ENCODE measurements at regions of chr3 and their contacts with region 1.

Region 1: GRCh38 chr3:141452036-141452435 is 34.8 kb upstream of the RASA2 start:
- DNase-seq: peak; percentile 80
- ATAC-seq: peak; percentile 68
- H3K4me3 ChIP-seq: no peak overlapping the region
- H3K27ac ChIP-seq: peak overlapping the region; percentile 28; the same call in 1 of the 2 replicates
- H3K4me1 ChIP-seq: peaks cover 24% of the 10 kb centered on the region
- H3K27me3 ChIP-seq: no peaks in the 10 kb centered on the region
- CTCF ChIP-seq: peak; percentile 89
- POLR2A ChIP-seq: peak; percentile 59; the same call in 1 of the 2 replicates
- RAD21 ChIP-seq: peak; percentile 95

Region 2: GRCh38 chr3:141000027-141000663 is 451.9 kb before region 1 on chr3:
- CTCF ChIA-PET with region 1: no interaction called
- POLR2A ChIA-PET with region 1: no interaction called
- dilution Hi-C with region 1: no loop called
- in situ Hi-C with region 1: loop called (anchors 10 kb)
- intact Hi-C with region 1: no loop called
- DNase-seq: peak; percentile 42
- ATAC-seq: peak; percentile 100
- H3K4me3 ChIP-seq: no peak overlapping the region
- H3K27ac ChIP-seq: no peak overlapping the region
- H3K4me1 ChIP-seq: no peaks in the 10 kb centered on the region
- H3K27me3 ChIP-seq: peaks cover 5% of the 10 kb centered on the region
- CTCF ChIP-seq: peak; percentile 70
- POLR2A ChIP-seq: no peak
- RAD21 ChIP-seq: peak; percentile 75

Region 3: GRCh38 chr3:141231101-141231935 is 220.7 kb before region 1 on chr3 and contains the start of gene PXYLP1:
- CTCF ChIA-PET with region 1: interaction called, 7 read pairs
- POLR2A ChIA-PET with region 1: no interaction called
- dilution Hi-C with region 1: no loop called
- in situ Hi-C with region 1: no loop called
- intact Hi-C with region 1: loop called (anchors 1 kb)
- DNase-seq: peak; percentile 85
- ATAC-seq: peak; percentile 98
- H3K4me3 ChIP-seq: peak within 1 kb of the TSS; percentile 71
- H3K27ac ChIP-seq: peak within 1 kb of the TSS; percentile 61
- H3K4me1 ChIP-seq: peaks cover 5% of the 10 kb centered on the region; the same call in 1 of the 2 replicates
- H3K27me3 ChIP-seq: peaks cover 3% of the 10 kb centered on the region; the same call in 1 of the 2 replicates
- CTCF ChIP-seq: peak; percentile 95
- POLR2A ChIP-seq: peak; percentile 82
- RAD21 ChIP-seq: peak; percentile 70
- total RNA-seq, gene PXYLP1: 13.3 and 15.6 TPM in 2 replicates

Region 4: GRCh38 chr3:141311496-141312353 is 140.3 kb before region 1 on chr3:
- CTCF ChIA-PET with region 1: interaction called, 26 read pairs
- POLR2A ChIA-PET with region 1: interaction called, 5 read pairs
- dilution Hi-C with region 1: no loop called
- in situ Hi-C with region 1: no loop called
- intact Hi-C with region 1: no loop called
- DNase-seq: peak; percentile 98
- ATAC-seq: peak; percentile 97
- H3K4me3 ChIP-seq: peak overlapping the region; percentile 74
- H3K27ac ChIP-seq: peak overlapping the region; percentile 75
- H3K4me1 ChIP-seq: peaks cover 4% of the 10 kb centered on the region; the same call in 1 of the 2 replicates
- H3K27me3 ChIP-seq: no peaks in the 10 kb centered on the region
- CTCF ChIP-seq: peak; percentile 90
- POLR2A ChIP-seq: peak; percentile 33
- RAD21 ChIP-seq: peak; percentile 92

Region 5: GRCh38 chr3:141360888-141361598 is 91.0 kb before region 1 on chr3:
- CTCF ChIA-PET with region 1: interaction called, 13 read pairs
- POLR2A ChIA-PET with region 1: no interaction called
- dilution Hi-C with region 1: no loop called
- in situ Hi-C with region 1: loop called (anchors 5 kb)
- intact Hi-C with region 1: loop called (anchors 1 kb)
- DNase-seq: peak; percentile 90
- ATAC-seq: peak; percentile 88
- H3K4me3 ChIP-seq: peak overlapping the region; percentile 15; the same call in 1 of the 2 replicates
- H3K27ac ChIP-seq: peak overlapping the region; percentile 85
- H3K4me1 ChIP-seq: peaks cover 7% of the 10 kb centered on the region
- H3K27me3 ChIP-seq: no peaks in the 10 kb centered on the region
- CTCF ChIP-seq: peak; percentile 84
- POLR2A ChIP-seq: 0 out of 2 replicates have a peak, but pooled peaks have one; percentile 21
- RAD21 ChIP-seq: peak; percentile 90

Region 6: DNA sequence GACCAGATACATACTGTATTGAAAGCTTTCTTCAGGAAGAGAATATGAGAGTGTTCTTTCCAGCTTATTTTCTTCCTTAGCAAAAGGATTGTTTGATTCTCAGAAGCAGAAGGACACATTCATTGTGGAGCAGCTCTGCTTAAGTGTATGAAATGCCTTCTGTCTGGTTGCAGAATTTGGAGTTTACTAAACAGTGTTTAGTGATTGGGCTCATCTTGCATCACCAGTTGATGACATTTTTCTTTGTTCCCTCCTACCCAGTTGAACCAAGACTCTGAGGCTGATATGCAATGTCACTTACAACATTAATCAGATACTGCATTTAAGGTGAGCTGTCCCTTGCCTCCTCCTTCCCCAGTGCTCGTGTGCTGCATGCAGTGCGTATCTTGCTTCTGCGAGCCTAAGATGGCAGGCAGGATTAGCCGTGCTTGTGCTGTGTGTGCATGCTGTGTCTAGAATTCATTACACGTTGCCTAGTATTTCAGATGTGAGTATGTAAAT is 65.4 kb before region 1 on chr3:
- CTCF ChIA-PET with region 1: interaction called, 11 read pairs
- POLR2A ChIA-PET with region 1: interaction called, 6 read pairs
- dilution Hi-C with region 1: no loop called
- in situ Hi-C with region 1: no loop called
- intact Hi-C with region 1: loop called (anchors 2 kb)
- DNase-seq: peak; percentile 83
- ATAC-seq: peak; percentile 45
- H3K4me3 ChIP-seq: peak overlapping the region; percentile 44
- H3K27ac ChIP-seq: peak overlapping the region; percentile 78
- H3K4me1 ChIP-seq: peaks cover 20% of the 10 kb centered on the region
- H3K27me3 ChIP-seq: no peaks in the 10 kb centered on the region
- CTCF ChIP-seq: no peak
- POLR2A ChIP-seq: peak; percentile 69
- RAD21 ChIP-seq: no peak

Region 7: GRCh38 chr3:141477224-141477623 is 25.2 kb after region 1 on chr3:
- CTCF ChIA-PET with region 1: interaction called, 12 read pairs
- POLR2A ChIA-PET with region 1: interaction called, 4 read pairs
- dilution Hi-C with region 1: no loop called
- in situ Hi-C with region 1: no loop called
- intact Hi-C with region 1: no loop called
- DNase-seq: peak; percentile 94
- ATAC-seq: peak; percentile 85
- H3K4me3 ChIP-seq: no peak overlapping the region
- H3K27ac ChIP-seq: no peak overlapping the region
- H3K4me1 ChIP-seq: no peaks in the 10 kb centered on the region
- H3K27me3 ChIP-seq: no peaks in the 10 kb centered on the region
- CTCF ChIP-seq: no peak
- POLR2A ChIP-seq: no peak
- RAD21 ChIP-seq: no peak